GM12878 (cell line): ENCODE measurements at regions of chr2 and their contacts with region 1.

Region 1: DNA sequence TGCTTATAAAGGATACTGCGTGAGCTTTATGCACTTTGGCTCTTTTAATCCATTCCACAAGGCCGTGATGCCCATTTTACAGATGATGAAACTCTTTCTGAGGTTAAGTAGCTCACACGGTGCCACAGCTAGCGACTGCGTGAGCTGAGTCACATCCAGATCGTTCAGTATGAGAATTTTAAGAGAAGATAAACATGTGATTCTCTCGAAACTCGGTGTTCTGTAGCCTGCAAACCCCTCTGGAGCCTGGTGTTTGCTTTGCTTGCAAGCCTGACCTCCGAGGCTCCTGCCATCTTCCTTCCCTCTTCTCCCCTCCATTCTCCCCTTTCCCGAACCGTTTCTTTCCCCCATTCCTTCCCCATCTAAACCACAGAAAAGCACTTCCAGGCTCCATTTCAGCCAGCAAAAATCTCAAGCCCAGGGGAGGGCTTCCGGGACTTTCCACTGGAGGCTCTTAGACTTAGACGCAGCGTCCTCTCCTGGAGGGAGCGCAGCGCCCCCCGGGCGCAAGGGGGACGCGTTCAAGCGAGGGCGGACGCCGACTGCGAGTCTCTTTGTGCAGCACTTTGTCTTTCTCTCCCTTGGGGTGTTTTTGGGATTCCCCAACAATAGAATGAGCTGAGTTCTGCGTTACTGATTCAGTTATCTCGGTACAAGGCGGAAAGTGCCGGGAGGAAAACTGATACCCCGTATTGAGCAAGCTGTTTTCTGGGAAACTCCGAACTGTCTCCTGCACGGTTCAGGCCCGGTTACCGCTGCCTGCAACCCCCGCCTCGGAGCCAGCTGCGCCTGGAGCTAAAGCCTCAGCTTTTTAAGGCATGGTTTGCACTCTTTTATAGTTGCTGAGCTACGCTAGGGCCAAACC is 38.0 kb downstream of the CYP1B1 start:
- DNase-seq: peak; percentile 76
- ATAC-seq: peak; percentile 89
- H3K4me3 ChIP-seq: peak overlapping the region; percentile 65
- H3K27ac ChIP-seq: peak overlapping the region; percentile 85
- H3K4me1 ChIP-seq: peaks cover 23% of the 10 kb centered on the region
- H3K27me3 ChIP-seq: no peaks in the 10 kb centered on the region
- CTCF ChIP-seq: peak; percentile 51 to 76 (median 63); a peak in 5 of 6 replicates
- EP300 ChIP-seq: peak; percentile 26 to 40; a peak in 2 of 4 replicates
- POLR2A ChIP-seq: peak; percentile 57
- RAD21 ChIP-seq: peak; percentile 77

Region 2: DNA sequence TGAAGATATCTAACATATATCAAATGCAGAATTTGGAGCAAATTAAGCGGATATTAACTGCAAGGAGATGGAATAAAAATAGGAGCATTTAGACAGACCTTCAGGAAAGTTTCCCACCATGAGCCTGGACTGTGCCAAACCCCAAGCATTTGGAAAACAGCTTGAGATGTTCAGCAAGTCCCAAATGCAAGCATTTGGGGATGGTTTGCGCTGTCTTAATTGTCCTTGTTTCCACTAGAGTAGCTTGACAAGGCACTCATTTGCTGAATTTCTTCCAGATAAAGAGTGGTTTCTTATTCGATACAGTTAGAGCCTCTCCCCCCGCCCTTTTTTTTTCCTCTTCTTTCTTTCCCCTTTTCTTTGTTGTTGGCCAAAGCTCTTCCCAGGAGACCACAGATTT is 289.4 kb before region 1 on chr2:
- CTCF ChIA-PET with region 1: no interaction called
- POLR2A ChIA-PET with region 1: no interaction called
- RAD21 ChIA-PET with region 1: no interaction called
- SMC1A ChIA-PET with region 1: no interaction called
- in situ Hi-C with region 1: no loop called
- intact Hi-C with region 1: no loop called
- DNase-seq: no peak
- ATAC-seq: no peak
- H3K4me3 ChIP-seq: no peak overlapping the region
- H3K27ac ChIP-seq: no peak overlapping the region
- H3K4me1 ChIP-seq: no peaks in the 10 kb centered on the region
- H3K27me3 ChIP-seq: no peaks in the 10 kb centered on the region
- CTCF ChIP-seq: no peak
- EP300 ChIP-seq: no peak
- POLR2A ChIP-seq: no peak
- RAD21 ChIP-seq: no peak

Region 3: DNA sequence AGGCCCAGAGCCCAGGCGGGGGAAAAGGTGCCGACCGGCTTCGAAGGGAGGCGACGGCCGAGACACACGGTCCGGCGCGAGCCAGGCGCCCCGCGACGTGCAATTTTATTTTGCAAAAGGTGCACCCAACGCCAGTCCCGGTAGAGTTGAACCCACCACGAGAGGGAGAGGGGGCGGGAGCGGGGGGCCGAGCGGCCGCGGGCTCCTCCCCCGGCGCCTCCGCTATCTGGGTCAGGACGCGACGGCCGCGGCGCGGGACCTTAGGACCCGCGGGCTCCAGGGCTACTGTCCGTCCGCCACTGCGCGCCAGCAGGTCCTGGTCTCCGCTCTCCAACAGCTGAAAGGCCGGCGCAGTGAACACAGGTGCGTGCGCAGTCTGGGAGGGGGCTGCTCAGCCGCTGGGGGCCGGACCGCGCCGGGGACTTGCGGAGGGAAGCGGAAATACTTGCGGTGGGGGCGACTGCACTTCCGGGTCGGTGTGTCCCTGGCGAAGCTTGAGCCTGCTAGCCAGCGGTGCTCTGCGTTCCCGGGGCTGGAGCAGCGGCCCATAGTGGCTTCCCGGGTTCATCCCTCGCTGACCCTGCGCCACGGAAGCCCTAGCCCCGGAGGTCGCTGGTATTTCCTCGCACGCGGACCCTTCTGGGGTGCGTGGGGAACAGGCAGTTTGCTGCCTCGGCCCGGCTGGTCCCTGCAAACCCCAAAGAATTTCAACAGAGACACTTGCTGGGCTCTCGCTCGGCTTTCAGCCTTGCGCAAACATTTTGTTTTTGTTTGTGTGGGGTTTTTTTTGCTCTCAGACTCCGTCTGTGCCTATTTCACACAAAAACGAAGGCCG is 112.7 kb before region 1 on chr2 and contains the start of gene RMDN2:
- CTCF ChIA-PET with region 1: interaction called, 3 read pairs
- POLR2A ChIA-PET with region 1: no interaction called
- RAD21 ChIA-PET with region 1: interaction called, 6 read pairs
- SMC1A ChIA-PET with region 1: no interaction called
- in situ Hi-C with region 1: no loop called
- intact Hi-C with region 1: loop called (anchors 5 kb)
- DNase-seq: peak; percentile 42
- ATAC-seq: peak; percentile 96
- H3K4me3 ChIP-seq: peak within 1 kb of the TSS; percentile 73
- H3K27ac ChIP-seq: peak within 1 kb of the TSS; percentile 88
- H3K4me1 ChIP-seq: peaks cover 7% of the 10 kb centered on the region
- H3K27me3 ChIP-seq: no peaks in the 10 kb centered on the region
- CTCF ChIP-seq: no peak
- EP300 ChIP-seq: no peak
- POLR2A ChIP-seq: peak; percentile 87
- RAD21 ChIP-seq: 0 out of 2 replicates have a peak, but pooled peaks have one; percentile 10
- polyA plus RNA-seq, gene RMDN2: 6.6 to 9.1 TPM

Region 4: DNA sequence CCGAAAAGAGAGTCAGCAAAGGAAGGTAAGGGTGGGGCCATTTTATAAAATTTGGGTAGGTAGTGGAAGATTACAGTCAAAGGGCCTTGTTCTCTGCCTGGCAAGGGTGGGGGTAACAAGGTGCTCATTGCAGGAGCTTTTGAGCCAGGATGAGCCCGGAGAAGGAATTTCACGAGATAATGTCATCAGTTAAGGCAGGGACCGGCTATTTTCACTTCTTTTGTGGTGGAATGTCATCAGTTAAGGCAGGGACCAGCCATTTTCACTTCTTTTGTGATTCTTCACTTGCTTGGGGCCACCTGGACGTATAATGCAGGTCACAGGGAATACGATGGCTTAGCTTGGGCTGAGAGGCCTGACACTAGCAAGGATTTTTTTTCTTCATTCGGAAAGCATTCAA is 20.2 kb before region 1 on chr2:
- CTCF ChIA-PET with region 1: interaction called, 5 read pairs
- POLR2A ChIA-PET with region 1: no interaction called
- RAD21 ChIA-PET with region 1: interaction called, 4 read pairs
- SMC1A ChIA-PET with region 1: interaction called, 14 read pairs
- in situ Hi-C with region 1: no loop called
- intact Hi-C with region 1: no loop called
- DNase-seq: no peak
- ATAC-seq: no peak
- H3K4me3 ChIP-seq: no peak overlapping the region
- H3K27ac ChIP-seq: no peak overlapping the region
- H3K4me1 ChIP-seq: no peaks in the 10 kb centered on the region
- H3K27me3 ChIP-seq: no peaks in the 10 kb centered on the region
- CTCF ChIP-seq: no peak
- EP300 ChIP-seq: no peak
- POLR2A ChIP-seq: no peak
- RAD21 ChIP-seq: no peak

Region 5: DNA sequence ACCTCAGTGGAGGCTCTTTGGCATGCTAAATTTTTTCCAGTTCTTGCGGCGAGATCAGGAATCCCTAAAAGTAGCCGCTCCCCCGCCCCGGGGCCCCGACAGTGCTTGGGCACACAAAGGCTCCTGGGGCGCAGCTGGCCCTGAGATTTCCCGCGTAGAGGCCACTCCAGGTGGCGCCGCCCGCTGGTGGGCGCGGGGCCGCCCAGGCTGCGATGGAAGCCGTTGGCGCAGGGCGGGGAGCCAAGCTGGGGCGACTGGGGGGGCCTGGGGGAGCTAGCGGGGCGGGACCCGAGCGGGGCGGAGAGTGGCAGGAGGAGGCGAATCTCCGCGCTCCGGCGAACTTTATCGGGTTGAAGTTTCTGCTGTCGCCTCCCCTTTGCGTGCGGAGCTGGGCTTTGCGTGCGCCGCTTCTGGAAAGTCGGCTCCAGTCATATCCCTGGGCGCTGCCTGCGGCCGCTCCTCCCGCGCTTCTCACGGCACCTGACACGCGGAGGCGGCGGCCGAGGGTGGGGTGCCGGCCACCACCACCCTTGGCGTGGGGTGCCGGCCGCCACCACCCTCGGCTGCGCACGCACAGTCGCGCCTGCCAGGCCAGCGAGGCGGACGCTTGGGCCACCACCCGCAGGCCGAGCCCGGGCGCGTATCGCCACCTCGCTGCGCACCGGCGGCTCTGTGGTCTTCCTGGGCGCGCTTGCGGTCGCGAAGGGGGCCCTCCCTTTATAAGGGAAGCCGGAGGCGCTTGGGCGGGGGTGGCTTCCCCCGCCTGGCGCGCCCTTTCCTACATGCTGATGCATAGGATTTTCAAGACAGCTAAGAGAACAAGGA is 38.8 kb after region 1 on chr2:
- CTCF ChIA-PET with region 1: interaction called, 7 read pairs
- POLR2A ChIA-PET with region 1: interaction called, 3 read pairs
- RAD21 ChIA-PET with region 1: interaction called, 12 read pairs
- SMC1A ChIA-PET with region 1: no interaction called
- in situ Hi-C with region 1: no loop called
- intact Hi-C with region 1: loop called (anchors 1 kb)
- DNase-seq: no peak
- ATAC-seq: peak; percentile 79
- H3K4me3 ChIP-seq: peak overlapping the region; percentile 71
- H3K27ac ChIP-seq: peak overlapping the region; percentile 77
- H3K4me1 ChIP-seq: peaks cover 11% of the 10 kb centered on the region
- H3K27me3 ChIP-seq: no peaks in the 10 kb centered on the region; a peak in 2 of 4 replicates
- CTCF ChIP-seq: peak; percentile 12 to 37 (median 34); a peak in 4 of 6 replicates
- EP300 ChIP-seq: peak; percentile 94 to 97
- POLR2A ChIP-seq: peak; percentile 63
- RAD21 ChIP-seq: peak; percentile 46; the same call in 1 of the 2 replicates

Region 6: GRCh38 chr2:38115216-38116032 is 77.4 kb after region 1 on chr2:
- CTCF ChIA-PET with region 1: interaction called, 15 read pairs
- POLR2A ChIA-PET with region 1: no interaction called
- RAD21 ChIA-PET with region 1: interaction called, 8 read pairs
- SMC1A ChIA-PET with region 1: interaction called, 11 read pairs
- in situ Hi-C with region 1: no loop called
- intact Hi-C with region 1: loop called (anchors 5 kb)
- DNase-seq: peak; percentile 55
- ATAC-seq: peak; percentile 96
- H3K4me3 ChIP-seq: no peak overlapping the region
- H3K27ac ChIP-seq: no peak overlapping the region; the same call in 1 of the 2 replicates
- H3K4me1 ChIP-seq: peaks cover 9% of the 10 kb centered on the region
- H3K27me3 ChIP-seq: no peaks in the 10 kb centered on the region
- CTCF ChIP-seq: peak; percentile 91 to 97 (median 96)
- EP300 ChIP-seq: no peak
- POLR2A ChIP-seq: no peak
- RAD21 ChIP-seq: peak; percentile 98

Region 7: GRCh38 chr2:38274286-38275276 is 236.6 kb after region 1 on chr2:
- CTCF ChIA-PET with region 1: interaction called, 10 read pairs
- POLR2A ChIA-PET with region 1: no interaction called
- RAD21 ChIA-PET with region 1: interaction called, 21 read pairs
- SMC1A ChIA-PET with region 1: interaction called, 8 read pairs
- in situ Hi-C with region 1: no loop called
- intact Hi-C with region 1: no loop called
- DNase-seq: peak; percentile 65
- ATAC-seq: peak; percentile 89
- H3K4me3 ChIP-seq: no peak overlapping the region
- H3K27ac ChIP-seq: no peak overlapping the region
- H3K4me1 ChIP-seq: no peaks in the 10 kb centered on the region
- H3K27me3 ChIP-seq: no peaks in the 10 kb centered on the region
- CTCF ChIP-seq: peak; percentile 53 to 79 (median 63); a peak in 5 of 6 replicates
- EP300 ChIP-seq: no peak
- POLR2A ChIP-seq: no peak
- RAD21 ChIP-seq: peak; percentile 93

Region 8: DNA sequence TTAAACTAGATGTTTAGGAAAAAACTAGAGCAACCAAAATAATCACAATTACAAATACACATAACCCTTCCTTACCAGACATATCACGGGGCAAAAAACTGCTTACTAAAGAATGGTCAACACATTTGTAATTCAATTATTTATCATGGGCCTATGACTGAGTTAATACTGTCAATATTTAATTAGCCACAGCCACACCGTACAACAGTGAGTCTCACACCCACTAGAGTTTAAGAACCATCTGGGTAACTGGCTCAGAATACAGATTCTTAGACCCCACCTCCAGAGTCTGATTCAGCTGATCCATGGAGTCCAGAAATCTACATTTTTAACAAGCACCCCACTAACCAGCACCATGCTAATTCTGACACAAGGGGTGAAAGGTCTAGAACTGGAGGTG is 324.2 kb after region 1 on chr2:
- CTCF ChIA-PET with region 1: no interaction called
- POLR2A ChIA-PET with region 1: no interaction called
- RAD21 ChIA-PET with region 1: no interaction called
- SMC1A ChIA-PET with region 1: no interaction called
- in situ Hi-C with region 1: no loop called
- intact Hi-C with region 1: no loop called
- DNase-seq: no peak
- ATAC-seq: peak; percentile 30
- H3K4me3 ChIP-seq: no peak overlapping the region
- H3K27ac ChIP-seq: no peak overlapping the region
- H3K4me1 ChIP-seq: no peaks in the 10 kb centered on the region; the same call in 1 of the 2 replicates
- H3K27me3 ChIP-seq: no peaks in the 10 kb centered on the region
- CTCF ChIP-seq: no peak
- EP300 ChIP-seq: no peak
- POLR2A ChIP-seq: no peak
- RAD21 ChIP-seq: no peak